Body of pancreas (tissue), 4 donors: ENCODE measurements at regions of chr16 and their contacts with region 1.

Region 1: GRCh38 chr16:56317998-56318826 is 107.1 kb downstream of the AMFR start:
- DNase-seq: peak; percentile 81 to 83 (median 82)
- ATAC-seq: peak; percentile 92
- H3K4me3 ChIP-seq: no peak overlapping the region
- H3K27ac ChIP-seq: no peak overlapping the region
- H3K4me1 ChIP-seq: peaks cover 6% of the 10 kb centered on the region
- H3K27me3 ChIP-seq: no peaks in the 10 kb centered on the region
- CTCF ChIP-seq: peak; percentile 89 to 96 (median 90)
- POLR2A ChIP-seq: no peak

Region 2: DNA sequence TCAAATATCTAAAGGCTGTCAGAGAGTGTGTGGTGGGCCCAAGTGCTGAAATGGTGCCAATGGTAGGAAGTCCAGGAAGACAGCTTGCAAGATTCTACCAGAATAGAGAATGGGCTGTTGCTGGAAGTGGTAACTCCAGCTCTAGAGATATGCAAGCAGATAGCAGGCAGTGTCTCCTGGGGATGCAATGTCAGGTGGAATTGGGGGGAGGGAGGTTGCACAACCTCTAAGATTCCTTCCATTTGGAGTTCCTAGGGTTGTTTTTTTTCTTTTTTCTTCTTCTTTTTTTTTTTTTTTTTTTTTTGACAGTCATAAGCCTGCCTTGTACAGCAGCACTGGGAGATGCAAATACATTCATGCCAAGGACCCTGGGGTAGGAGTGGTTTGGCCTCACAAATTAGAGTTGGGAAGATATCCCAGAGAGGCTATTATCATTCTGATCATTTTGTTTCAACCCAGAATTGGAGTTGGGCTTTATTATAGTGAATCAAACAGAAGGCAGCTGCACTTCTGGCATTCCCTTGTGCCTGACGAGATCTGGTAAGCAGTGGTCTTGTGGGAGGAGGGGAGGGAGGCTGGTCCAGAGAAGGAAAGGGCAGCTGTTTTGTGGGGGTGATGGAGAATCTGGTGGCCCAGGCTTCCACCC is 611.4 kb before region 1 on chr16:
- intact Hi-C with region 1: loop called (anchors 5 kb)
- DNase-seq: no peak
- ATAC-seq: no peak
- H3K4me3 ChIP-seq: no peak overlapping the region
- H3K27ac ChIP-seq: no peak overlapping the region
- H3K4me1 ChIP-seq: no peaks in the 10 kb centered on the region
- H3K27me3 ChIP-seq: no peaks in the 10 kb centered on the region
- CTCF ChIP-seq: no peak
- POLR2A ChIP-seq: no peak

Region 3: GRCh38 chr16:55949518-55949917 is 368.7 kb before region 1 on chr16:
- intact Hi-C with region 1: loop called (anchors 5 kb)
- DNase-seq: no peak
- ATAC-seq: no peak
- H3K4me3 ChIP-seq: no peak overlapping the region
- H3K27ac ChIP-seq: no peak overlapping the region
- H3K4me1 ChIP-seq: no peaks in the 10 kb centered on the region
- H3K27me3 ChIP-seq: no peaks in the 10 kb centered on the region
- CTCF ChIP-seq: no peak
- POLR2A ChIP-seq: no peak

Region 4: DNA sequence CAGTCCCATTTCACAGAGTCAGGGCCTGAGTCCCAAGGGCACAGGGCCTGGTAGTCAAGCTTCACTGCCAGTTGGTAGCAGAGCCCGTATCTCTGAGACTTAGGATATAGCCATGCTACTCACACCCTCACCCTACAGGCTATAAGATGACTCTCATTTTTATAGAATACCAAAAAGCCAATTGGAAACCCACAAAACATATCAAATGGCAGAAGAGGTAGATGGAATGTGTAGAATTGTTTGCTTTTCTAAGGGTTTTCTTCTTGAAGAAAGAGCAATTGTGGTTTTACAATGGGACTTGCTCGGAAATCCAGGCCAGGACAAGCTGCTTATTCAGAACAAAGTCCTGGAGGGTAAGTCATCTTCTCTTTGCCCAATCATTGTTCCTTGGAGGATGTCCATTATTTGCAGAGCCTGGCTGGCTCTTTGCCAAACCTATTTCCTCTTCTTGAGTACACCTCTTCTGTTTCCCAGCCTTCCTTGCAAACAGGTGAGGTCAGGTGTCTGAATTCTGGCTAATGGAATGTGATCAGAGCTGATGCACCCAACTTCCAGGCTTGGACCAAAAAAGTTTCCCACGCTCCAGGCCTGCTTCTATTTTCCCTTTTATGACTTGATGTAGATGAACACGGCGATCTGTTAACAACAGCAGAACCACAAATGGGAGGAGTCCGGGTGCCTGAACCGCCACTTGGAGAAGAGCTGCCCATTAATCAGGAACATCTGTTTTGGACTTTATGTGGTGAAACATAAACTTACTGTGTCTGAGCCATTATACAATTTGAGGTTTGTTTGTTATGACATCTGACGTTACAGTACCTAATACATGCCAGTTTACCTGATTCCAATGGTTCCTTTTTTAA is 1023.5 kb after region 1 on chr16:
- intact Hi-C with region 1: no loop called
- DNase-seq: peak in 2 of 4 donors; percentile 25 to 26
- ATAC-seq: no peak
- H3K4me3 ChIP-seq: no peak overlapping the region
- H3K27ac ChIP-seq: no peak overlapping the region
- H3K4me1 ChIP-seq: no peaks in the 10 kb centered on the region
- H3K27me3 ChIP-seq: no peaks in the 10 kb centered on the region
- CTCF ChIP-seq: no peak
- POLR2A ChIP-seq: no peak